AG04449 (cell line): ENCODE measurements at regions of chr19 and their contacts with region 1.

Region 1: DNA sequence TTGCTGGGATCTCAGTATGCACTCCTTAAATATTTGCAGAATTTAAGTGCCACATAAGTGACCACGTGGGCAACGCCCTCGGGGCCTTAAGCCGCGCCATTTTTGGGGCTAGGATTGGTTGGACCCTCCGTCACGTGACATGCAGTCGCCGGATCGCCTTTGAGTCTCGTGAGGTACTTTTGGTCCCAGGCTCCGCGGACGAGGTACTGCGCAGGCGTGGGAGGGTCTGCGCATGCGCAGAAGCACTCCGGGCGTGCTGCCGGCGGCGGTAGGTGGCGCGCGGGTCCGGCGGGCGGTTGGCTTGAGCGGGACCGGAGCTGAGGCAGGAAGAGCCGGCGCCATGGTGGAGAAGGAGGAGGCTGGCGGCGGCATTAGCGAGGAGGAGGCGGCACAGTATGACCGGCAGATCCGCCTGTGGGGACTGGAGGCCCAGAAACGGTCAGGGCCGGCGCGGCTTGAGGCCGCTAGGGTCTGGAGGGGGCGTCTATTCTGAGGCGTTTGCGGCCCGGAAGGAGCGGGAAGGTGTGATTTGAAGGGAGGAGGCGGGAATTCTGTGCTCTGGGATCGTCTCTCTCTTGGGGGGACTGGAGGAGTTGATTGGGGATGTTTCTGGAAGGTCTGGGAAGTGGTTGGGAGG is at the start of gene SAE1:
- DNase-seq: peak; percentile 86
- H3K4me3 ChIP-seq: peak within 1 kb of the TSS; percentile 93
- CTCF ChIP-seq: peak; percentile 79

Region 2: GRCh38 chr19:47002107-47002766 is 128.5 kb before region 1 on chr19:
- CTCF ChIA-PET with region 1: no interaction called
- POLR2A ChIA-PET with region 1: no interaction called
- DNase-seq: no peak
- H3K4me3 ChIP-seq: no peak overlapping the region
- CTCF ChIP-seq: no peak

Region 3: GRCh38 chr19:47013041-47013517 is 117.6 kb before region 1 on chr19:
- CTCF ChIA-PET with region 1: interaction called, 42 read pairs
- POLR2A ChIA-PET with region 1: no interaction called
- DNase-seq: no peak
- H3K4me3 ChIP-seq: no peak overlapping the region
- CTCF ChIP-seq: peak; percentile 97

Region 4: GRCh38 chr19:47075179-47075810 is 55.4 kb before region 1 on chr19:
- CTCF ChIA-PET with region 1: interaction called, 50 read pairs
- POLR2A ChIA-PET with region 1: no interaction called
- DNase-seq: no peak
- H3K4me3 ChIP-seq: no peak overlapping the region
- CTCF ChIP-seq: no peak

Region 5: DNA sequence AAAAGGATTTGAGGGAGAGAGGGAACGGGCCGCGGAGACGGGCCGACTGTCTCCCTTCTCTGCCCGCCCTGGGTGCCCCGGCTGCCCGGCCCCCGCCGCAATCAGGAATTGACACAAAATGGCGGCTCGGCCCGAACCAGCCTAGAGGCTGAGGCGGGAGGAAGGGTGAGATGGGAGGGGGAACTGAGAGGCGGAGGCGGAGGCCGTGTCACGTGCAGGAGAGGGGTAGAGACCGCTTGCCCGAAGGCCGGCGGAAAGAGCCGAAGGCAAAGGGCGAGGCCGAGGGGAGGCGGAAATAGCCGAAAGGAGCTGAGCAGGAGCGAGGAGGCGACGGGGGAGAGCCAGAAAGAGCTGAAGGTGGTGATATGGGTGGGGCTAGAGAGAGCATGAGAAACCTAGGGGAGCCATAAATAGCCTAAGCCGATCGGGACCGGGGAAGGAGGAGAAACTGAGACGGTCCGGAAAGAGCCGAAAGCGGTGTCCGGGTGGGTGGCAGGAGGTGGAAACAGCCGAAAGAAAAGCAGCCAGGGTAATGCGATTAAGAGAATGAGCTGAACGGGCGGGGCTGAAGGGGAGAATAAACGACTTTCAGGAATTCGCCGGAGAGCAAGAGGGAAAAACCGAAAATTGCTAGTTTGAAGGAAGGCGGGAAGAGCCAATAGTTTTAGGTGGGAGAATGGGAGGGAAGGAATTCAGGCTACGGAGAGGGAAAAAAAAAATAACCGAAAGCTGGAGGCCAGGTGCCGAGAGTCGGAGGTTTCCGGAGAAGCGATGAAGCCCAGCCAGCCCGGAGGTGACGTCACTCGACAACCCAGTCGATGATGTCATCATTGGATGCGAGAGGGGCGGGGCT is 17.5 kb before region 1 on chr19 and contains the start of gene ZC3H4:
- CTCF ChIA-PET with region 1: interaction called, 18 read pairs
- POLR2A ChIA-PET with region 1: interaction called, 12 read pairs
- DNase-seq: peak; percentile 95
- H3K4me3 ChIP-seq: peak within 1 kb of the TSS; percentile 86
- CTCF ChIP-seq: no peak

Region 6: DNA sequence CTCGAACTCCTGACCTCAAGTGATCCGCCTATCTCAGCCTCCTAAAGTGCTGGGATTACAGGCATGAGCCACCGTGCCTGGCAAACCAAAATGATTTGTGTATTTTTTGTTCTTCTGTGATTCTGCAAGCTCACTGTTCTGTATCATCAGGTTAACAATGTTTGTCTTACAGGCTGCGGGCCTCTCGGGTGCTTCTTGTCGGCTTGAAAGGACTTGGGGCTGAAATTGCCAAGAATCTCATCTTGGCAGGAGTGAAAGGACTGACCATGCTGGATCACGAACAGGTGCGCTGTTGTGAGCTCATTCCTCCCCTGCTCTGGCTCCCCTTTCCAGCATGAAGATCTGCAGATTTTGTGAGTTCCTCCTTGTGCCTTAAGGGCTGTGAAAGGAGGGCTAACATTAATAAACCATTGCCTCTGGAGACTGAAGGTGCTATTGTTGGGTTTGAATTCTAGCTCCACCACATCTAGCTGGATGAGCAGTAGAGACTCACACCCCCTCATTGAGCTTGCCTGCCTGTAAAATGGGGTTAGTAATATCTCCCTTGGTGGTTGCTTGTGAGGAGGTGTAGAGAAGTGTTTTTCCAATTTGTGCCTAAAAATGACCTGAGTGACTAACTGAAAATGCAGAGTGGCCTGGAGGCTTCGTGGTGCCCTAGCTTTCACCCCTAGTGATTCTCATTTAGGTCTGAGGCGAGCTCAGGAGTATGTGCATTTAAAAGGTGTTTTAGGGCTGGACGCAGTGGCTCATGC is 12.8 kb after region 1 on chr19:
- CTCF ChIA-PET with region 1: interaction called, 37 read pairs
- POLR2A ChIA-PET with region 1: no interaction called
- DNase-seq: no peak
- H3K4me3 ChIP-seq: no peak overlapping the region
- CTCF ChIP-seq: no peak

Region 7: DNA sequence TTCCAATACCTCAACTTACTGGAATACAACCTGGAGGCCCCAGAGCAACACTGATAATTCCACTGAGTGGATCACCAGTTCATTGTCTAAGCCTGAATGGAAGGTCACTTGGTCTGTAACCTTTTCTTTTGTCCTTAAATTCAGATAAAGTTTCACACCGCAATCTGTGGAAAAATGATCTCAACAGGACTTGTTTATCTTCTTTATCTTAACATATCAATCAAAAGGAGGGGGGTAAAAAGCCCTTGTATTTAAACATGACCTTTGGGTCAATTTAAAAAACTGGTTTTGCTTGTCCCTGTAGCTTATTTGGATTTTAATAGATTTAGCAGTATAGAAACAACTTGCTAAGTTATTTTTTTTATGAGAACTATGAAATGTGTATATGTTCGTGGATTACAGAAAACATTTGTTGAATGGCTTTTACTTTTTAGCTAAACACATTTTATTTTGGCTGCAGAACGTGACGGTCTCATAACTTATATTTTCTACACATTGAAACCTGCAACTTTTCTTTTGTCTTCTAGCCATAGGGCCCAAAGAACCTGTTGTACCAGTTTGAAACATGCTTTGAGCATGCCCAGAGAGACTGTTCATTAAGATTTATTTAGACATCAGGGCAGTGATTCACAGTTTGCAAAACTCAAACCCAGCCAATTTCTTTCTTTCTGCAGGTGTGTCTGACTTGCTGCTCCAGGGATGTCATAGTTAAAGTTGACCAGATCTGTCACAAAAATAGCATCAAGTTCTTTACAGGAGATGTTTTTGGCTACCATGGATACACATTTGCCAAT is 21.7 kb after region 1 on chr19:
- CTCF ChIA-PET with region 1: interaction called, 37 read pairs
- POLR2A ChIA-PET with region 1: interaction called, 3 read pairs
- DNase-seq: no peak
- H3K4me3 ChIP-seq: no peak overlapping the region
- CTCF ChIP-seq: no peak

Region 8: DNA sequence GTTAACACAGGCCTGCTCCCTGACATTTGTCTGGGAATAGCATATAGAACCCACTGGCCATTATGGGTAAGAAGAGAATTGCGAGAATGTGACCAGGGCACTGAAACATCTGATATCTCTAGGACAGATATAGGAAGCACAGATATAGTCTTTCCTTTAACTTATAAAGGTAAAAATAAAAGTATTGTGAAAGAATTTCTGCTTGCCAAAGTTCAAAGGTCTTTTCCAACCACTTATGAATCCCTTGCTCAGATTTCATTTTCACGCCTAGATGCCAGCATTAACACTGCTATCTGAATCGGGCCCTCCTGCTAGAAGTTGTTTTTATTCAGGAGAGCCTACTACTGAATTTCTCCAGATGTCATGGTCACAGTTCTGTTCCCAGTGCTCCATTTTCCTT is 72.5 kb after region 1 on chr19:
- CTCF ChIA-PET with region 1: no interaction called
- POLR2A ChIA-PET with region 1: no interaction called
- DNase-seq: no peak
- H3K4me3 ChIP-seq: no peak overlapping the region
- CTCF ChIP-seq: no peak